Activated T-helper 2 cell treated with anti-CD3 and anti-CD28 coated beads, Interferon-gamma antibody, Interleukin-2, Interleukin-4, amounts not matched to agents 10 μg/mL and 5 μg/mL and 100 μg/mL, durations not matched to agents 14 hours and 24 hours and 36 hours (primary cell): ENCODE measurements at regions of chr3 and their contacts with region 1.

Region 1: GRCh38 chr3:50272911-50273693 is 4.2 kb downstream of the SEMA3B start:
- DNase-seq: peak; percentile 82
- H3K4me3 Mint-ChIP-seq: peak overlapping the region; percentile 64
- H3K27ac Mint-ChIP-seq: no peak overlapping the region
- H3K4me1 Mint-ChIP-seq: peaks cover 11% of the 10 kb centered on the region
- H3K27me3 Mint-ChIP-seq: peaks cover 39% of the 10 kb centered on the region

Region 2: GRCh38 chr3:49984394-49984793 is 288.7 kb before region 1 on chr3:
- intact Hi-C with region 1: no loop called
- DNase-seq: no peak
- H3K4me3 Mint-ChIP-seq: no peak overlapping the region
- H3K27ac Mint-ChIP-seq: no peak overlapping the region
- H3K4me1 Mint-ChIP-seq: no peaks in the 10 kb centered on the region
- H3K27me3 Mint-ChIP-seq: no peaks in the 10 kb centered on the region

Region 3: GRCh38 chr3:50121416-50122032 is 151.6 kb before region 1 on chr3:
- intact Hi-C with region 1: loop called (anchors 1 kb)
- DNase-seq: peak; percentile 55
- H3K4me3 Mint-ChIP-seq: no peak overlapping the region
- H3K27ac Mint-ChIP-seq: no peak overlapping the region
- H3K4me1 Mint-ChIP-seq: no peaks in the 10 kb centered on the region
- H3K27me3 Mint-ChIP-seq: no peaks in the 10 kb centered on the region

Region 4: GRCh38 chr3:50192689-50193141 is 80.4 kb before region 1 on chr3:
- intact Hi-C with region 1: loop called (anchors 1 kb)
- DNase-seq: peak; percentile 75
- H3K4me3 Mint-ChIP-seq: no peak overlapping the region
- H3K27ac Mint-ChIP-seq: no peak overlapping the region
- H3K4me1 Mint-ChIP-seq: peaks cover 2% of the 10 kb centered on the region
- H3K27me3 Mint-ChIP-seq: peaks cover 20% of the 10 kb centered on the region

Region 5: DNA sequence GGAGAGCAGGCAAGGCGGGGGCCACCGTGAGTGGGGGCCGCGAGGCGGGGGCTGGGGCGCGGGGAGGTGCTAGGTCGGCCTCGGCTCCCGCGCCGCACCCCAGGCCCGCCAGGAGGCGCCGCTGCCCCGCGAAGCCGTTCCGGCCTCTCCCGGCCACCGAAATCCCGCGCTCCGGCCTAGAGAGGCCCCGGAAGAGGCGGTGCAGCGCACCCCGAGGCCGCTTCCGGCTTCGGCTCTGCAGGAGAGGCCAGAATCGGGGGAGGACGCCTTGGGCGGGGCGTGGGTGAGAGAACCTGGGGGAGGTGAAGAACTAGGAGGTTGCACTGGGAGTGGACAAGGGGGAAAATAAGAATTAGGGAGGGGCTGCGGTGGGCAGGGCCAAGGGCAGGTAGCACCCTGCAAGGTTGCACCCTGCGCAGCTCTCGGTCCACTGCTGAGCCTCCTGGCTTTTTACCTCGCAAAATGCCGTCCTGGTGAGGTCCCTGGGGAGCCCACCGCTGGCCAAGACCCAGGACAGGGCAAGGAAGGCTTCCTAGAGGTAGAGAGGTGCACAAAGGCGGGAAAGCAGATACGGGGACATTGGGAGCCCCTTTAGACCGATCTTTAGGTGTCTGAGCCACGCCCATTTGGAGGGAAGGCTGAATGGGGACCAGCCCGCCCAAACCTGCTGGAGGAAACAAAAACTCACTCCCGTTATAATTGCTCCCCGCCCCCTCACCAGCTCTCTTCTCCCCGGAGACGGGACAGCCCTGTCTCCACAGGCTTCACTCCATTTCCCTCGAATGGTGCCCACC is 45.5 kb before region 1 on chr3:
- intact Hi-C with region 1: loop called (anchors 1 kb)
- DNase-seq: peak; percentile 90
- H3K4me3 Mint-ChIP-seq: peak overlapping the region; percentile 89
- H3K27ac Mint-ChIP-seq: peak overlapping the region; percentile 78
- H3K4me1 Mint-ChIP-seq: peaks cover 17% of the 10 kb centered on the region
- H3K27me3 Mint-ChIP-seq: peaks cover 7% of the 10 kb centered on the region

Region 6: GRCh38 chr3:50245831-50246516 is 27.1 kb before region 1 on chr3:
- intact Hi-C with region 1: loop called (anchors 2 kb)
- DNase-seq: peak; percentile 86
- H3K4me3 Mint-ChIP-seq: peak overlapping the region; percentile 82
- H3K27ac Mint-ChIP-seq: peak overlapping the region; percentile 92
- H3K4me1 Mint-ChIP-seq: peaks cover 62% of the 10 kb centered on the region
- H3K27me3 Mint-ChIP-seq: no peaks in the 10 kb centered on the region

Region 7: DNA sequence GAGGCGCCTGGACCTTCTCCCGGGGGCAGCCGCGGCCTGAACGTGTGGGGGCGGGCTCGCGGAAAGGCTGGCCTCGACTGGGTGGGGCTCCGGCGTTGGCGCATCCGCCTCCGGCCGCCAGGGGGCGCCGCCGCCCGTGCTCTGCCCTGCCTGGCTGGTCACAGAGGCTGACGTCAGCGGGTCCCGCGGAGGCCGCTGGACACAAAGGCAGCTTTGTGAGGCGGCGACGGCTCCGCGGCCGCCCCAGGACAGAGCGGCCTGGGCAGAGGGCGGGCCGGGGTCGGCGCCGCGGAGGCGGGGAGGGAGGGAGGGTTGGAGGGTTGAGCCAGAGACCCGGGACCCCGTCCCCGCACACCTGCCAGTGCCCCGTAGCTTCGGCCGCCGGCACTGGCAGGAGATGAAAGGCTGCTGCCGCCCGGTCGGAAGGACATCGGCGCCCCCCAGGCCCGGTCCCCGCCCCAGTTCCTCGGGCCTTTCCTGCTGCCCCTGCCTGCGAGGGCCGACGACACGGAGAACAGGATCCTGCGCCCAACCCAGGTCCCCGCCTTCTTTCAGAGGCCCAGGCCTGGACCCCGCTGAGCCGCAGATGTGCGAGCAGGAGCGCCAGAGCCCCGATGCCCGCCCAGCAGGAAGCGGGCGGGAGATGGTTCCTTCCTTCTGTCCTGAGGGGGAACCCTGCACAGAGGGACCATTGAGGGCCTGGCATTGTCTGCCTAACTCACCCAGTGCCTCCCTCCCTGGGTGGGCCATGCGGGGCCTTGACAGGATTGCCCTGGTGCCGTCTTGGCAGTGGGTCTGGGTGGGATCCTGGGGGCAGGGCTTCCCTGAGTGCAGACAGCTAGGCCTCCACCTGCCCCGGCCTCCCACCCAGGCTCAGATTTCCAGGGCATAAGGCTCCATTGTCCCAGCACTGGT is 12.8 kb before region 1 on chr3:
- intact Hi-C with region 1: loop called (anchors 1 kb)
- DNase-seq: peak; percentile 83
- H3K4me3 Mint-ChIP-seq: peak overlapping the region; percentile 69
- H3K27ac Mint-ChIP-seq: peak overlapping the region; percentile 67
- H3K4me1 Mint-ChIP-seq: peaks cover 3% of the 10 kb centered on the region
- H3K27me3 Mint-ChIP-seq: no peaks in the 10 kb centered on the region

Region 8: GRCh38 chr3:50321336-50322114 is 48.4 kb after region 1 on chr3:
- intact Hi-C with region 1: loop called (anchors 1 kb)
- DNase-seq: peak; percentile 84
- H3K4me3 Mint-ChIP-seq: peak overlapping the region; percentile 74
- H3K27ac Mint-ChIP-seq: peak overlapping the region; percentile 92
- H3K4me1 Mint-ChIP-seq: peaks cover 11% of the 10 kb centered on the region
- H3K27me3 Mint-ChIP-seq: no peaks in the 10 kb centered on the region

Region 9: GRCh38 chr3:50388016-50388719 is 115.1 kb after region 1 on chr3:
- intact Hi-C with region 1: no loop called
- DNase-seq: no peak
- H3K4me3 Mint-ChIP-seq: no peak overlapping the region
- H3K27ac Mint-ChIP-seq: no peak overlapping the region
- H3K4me1 Mint-ChIP-seq: peaks cover 6% of the 10 kb centered on the region
- H3K27me3 Mint-ChIP-seq: no peaks in the 10 kb centered on the region